ENCODE measurements at regions of chr9 and their contacts with region 1.

Region 1: GRCh38 chr9:69549310-69550202 is 122.6 kb downstream of the APBA1 start:
- DNase-seq: peak in 1 of 2 donors; percentile 17
- ATAC-seq: peak in 6 of 8 donors; percentile 30 to 75 (median 56)
- H3K4me3 ChIP-seq: no peak overlapping the region
- H3K27ac ChIP-seq: no peak overlapping the region
- H3K4me1 ChIP-seq: peaks cover 0 to 5% (median 2%) of the 10 kb centered on the region in 9 donors
- H3K27me3 ChIP-seq: no peaks in the 10 kb centered on the region
- CTCF ChIP-seq: peak; percentile 50 to 92 (median 86)

Region 2: GRCh38 chr9:69035438-69036308 is 513.9 kb before region 1 on chr9 and contains the start of gene FXN:
- intact Hi-C with region 1: loop called in 2 of 10 experiments (anchors 10 kb)
- DNase-seq: peak; percentile 83 to 87
- ATAC-seq: peak; percentile 91 to 97 (median 95)
- H3K4me3 ChIP-seq: peak within 1 kb of the TSS; percentile 54 to 81 (median 72)
- H3K27ac ChIP-seq: peak within 1 kb of the TSS; percentile 34 to 89 (median 86)
- H3K4me1 ChIP-seq: peaks cover 0 to 22% (median 11%) of the 10 kb centered on the region in 9 donors
- H3K27me3 ChIP-seq: no peaks in the 10 kb centered on the region
- CTCF ChIP-seq: peak; percentile 98 to 100 (median 99)
- total RNA-seq, gene FXN: 18.8 to 41.8 (median 36.8) TPM

Region 3: GRCh38 chr9:69044240-69045219 is 505.0 kb before region 1 on chr9:
- intact Hi-C with region 1: loop called in 2 of 10 experiments (anchors 10 kb)
- DNase-seq: peak in 1 of 2 donors; percentile 30
- ATAC-seq: peak in 6 of 8 donors; percentile 58 to 80 (median 64)
- H3K4me3 ChIP-seq: no peak overlapping the region
- H3K27ac ChIP-seq: peak overlapping the region in 8 of 10 donors; percentile 26 to 64 (median 40)
- H3K4me1 ChIP-seq: peaks cover 0 to 39% (median 25%) of the 10 kb centered on the region in 9 donors
- H3K27me3 ChIP-seq: no peaks in the 10 kb centered on the region
- CTCF ChIP-seq: no peak

Region 4: GRCh38 chr9:69476016-69476415 is 73.5 kb before region 1 on chr9:
- intact Hi-C with region 1: no loop called
- DNase-seq: no peak
- ATAC-seq: no peak
- H3K4me3 ChIP-seq: no peak overlapping the region
- H3K27ac ChIP-seq: no peak overlapping the region
- H3K4me1 ChIP-seq: peaks cover 0 to 5% (median 0%) of the 10 kb centered on the region in 9 donors
- H3K27me3 ChIP-seq: no peaks in the 10 kb centered on the region
- CTCF ChIP-seq: no peak

Region 5: GRCh38 chr9:69759421-69760277 is 210.1 kb after region 1 on chr9 and contains the start of gene PTAR1:
- intact Hi-C with region 1: loop called in 1 of 10 experiments (anchors 10 kb)
- DNase-seq: peak; percentile 90 to 92
- ATAC-seq: peak; percentile 97 to 98 (median 97)
- H3K4me3 ChIP-seq: peak within 1 kb of the TSS; percentile 72 to 97 (median 84)
- H3K27ac ChIP-seq: peak within 1 kb of the TSS; percentile 86 to 99 (median 98)
- H3K4me1 ChIP-seq: peaks cover 0 to 45% (median 25%) of the 10 kb centered on the region in 9 donors
- H3K27me3 ChIP-seq: no peaks in the 10 kb centered on the region
- CTCF ChIP-seq: no peak
- total RNA-seq, gene PTAR1: 21.8 to 30.2 (median 24.3) TPM

Region 6: GRCh38 chr9:69877854-69878514 is 328.4 kb after region 1 on chr9:
- intact Hi-C with region 1: loop called in 5 of 10 experiments (anchors 5 to 10 kb)
- DNase-seq: no peak
- ATAC-seq: peak in 6 of 8 donors; percentile 38 to 74 (median 54)
- H3K4me3 ChIP-seq: no peak overlapping the region
- H3K27ac ChIP-seq: no peak overlapping the region
- H3K4me1 ChIP-seq: peaks cover 0 to 19% (median 5%) of the 10 kb centered on the region in 9 donors
- H3K27me3 ChIP-seq: no peaks in the 10 kb centered on the region
- CTCF ChIP-seq: peak; percentile 13 to 70 (median 59)

Region 7: DNA sequence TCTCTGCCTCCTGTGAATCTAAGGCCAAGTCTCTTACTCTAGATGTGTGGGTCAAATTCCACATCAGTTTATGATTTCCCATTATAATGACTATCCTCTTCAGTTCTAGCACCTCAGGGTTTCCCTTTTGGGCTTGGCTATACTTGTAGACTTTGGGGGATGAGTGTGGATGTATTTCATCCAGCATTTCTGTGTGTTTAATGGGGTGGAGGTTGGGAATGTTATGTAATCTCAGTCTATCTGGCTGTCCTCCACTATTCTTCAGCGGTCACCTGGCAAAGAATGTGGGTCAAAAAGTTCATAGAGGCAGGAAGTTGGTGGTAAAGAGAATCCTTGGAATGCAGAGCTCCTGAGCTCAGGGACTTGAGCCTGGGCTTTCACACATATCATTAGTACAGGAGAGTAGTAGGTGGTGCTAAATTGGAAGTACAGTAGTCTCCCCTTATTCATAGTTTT is 335.9 kb after region 1 on chr9:
- intact Hi-C with region 1: loop called in 1 of 10 experiments (anchors 10 kb)
- DNase-seq: no peak
- ATAC-seq: no peak
- H3K4me3 ChIP-seq: no peak overlapping the region
- H3K27ac ChIP-seq: no peak overlapping the region
- H3K4me1 ChIP-seq: peaks cover 0 to 12% (median 0%) of the 10 kb centered on the region in 9 donors
- H3K27me3 ChIP-seq: no peaks in the 10 kb centered on the region
- CTCF ChIP-seq: no peak